GM13976 (cell line): ENCODE measurements at regions of chr5 and their contacts with region 1.

Region 1: DNA sequence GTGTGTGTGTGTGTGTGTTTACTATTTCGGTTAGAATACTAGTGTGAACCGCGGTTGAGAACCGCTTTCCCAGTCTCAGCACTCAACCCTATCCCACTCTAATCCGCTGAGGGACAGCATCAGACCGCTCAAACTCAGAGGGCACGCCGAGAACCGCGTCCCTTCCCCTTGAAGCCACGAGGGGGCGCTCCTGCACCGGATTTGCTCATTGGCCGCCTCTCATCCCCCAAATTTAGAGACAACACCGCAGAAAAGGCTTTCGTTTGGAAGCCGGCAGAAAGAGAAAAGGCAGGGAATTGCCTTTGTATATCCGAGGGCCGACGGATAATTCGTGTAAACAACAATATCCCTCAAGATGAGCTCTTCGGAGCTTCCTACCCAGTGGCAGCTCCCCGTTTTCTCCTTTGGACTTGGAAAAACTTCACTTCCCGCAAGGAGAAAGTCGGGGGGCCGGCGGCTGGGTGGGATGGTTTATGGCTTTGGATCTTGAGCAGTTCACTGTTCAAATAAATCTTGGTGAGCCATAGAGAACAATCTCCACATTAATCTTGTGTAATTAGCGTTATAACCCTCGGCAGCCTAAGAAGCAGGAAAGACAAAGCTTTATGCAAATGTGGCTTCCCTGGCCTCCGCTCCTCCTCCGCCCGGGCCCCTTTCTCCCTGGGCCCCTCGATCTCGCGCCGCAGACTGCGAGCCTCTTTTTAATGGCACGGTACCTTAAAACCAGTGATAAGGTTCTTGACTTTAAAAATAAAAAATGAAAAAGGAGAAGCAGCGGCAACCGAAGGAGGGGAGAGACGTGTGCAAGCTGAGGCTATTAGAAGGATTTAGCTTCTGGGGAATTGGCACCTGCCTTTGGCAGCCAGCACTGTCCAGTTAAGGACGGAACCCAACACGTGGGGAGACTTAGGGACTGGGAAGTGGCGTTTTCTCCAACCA is 296.8 kb downstream of the PARP8 start:
- DNase-seq: peak; percentile 88
- CTCF ChIP-seq: peak; percentile 99

Region 2: DNA sequence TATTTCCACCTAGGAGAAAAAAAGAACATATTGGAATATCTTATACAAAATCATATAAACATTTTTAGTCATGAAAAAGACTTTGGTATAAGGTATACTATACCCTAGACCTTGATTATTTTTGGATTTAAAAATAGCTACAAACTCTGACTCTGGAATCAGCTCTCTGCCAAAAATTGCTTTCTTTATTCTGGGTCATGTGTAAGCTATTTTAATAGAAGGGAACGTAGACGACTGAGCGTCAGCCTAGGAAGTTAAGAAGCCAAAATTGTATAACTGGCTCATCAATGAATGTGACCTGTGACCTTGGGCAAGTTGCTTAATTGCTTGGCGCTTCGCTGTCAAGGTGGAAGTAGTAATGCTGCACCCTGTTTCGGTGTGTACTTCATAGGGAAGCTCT is 139.6 kb before region 1 on chr5:
- in situ Hi-C with region 1: no loop called
- DNase-seq: no peak
- CTCF ChIP-seq: no peak

Region 3: GRCh38 chr5:51382763-51383490 is 419.7 kb after region 1 on chr5 and contains the start of gene ISL1:
- in situ Hi-C with region 1: loop called (anchors 25 kb)
- DNase-seq: no peak
- CTCF ChIP-seq: no peak

Region 4: GRCh38 chr5:52007230-52007858 is 1044.1 kb after region 1 on chr5:
- in situ Hi-C with region 1: loop called (anchors 25 kb)
- DNase-seq: no peak
- CTCF ChIP-seq: peak; percentile 61

Region 5: DNA sequence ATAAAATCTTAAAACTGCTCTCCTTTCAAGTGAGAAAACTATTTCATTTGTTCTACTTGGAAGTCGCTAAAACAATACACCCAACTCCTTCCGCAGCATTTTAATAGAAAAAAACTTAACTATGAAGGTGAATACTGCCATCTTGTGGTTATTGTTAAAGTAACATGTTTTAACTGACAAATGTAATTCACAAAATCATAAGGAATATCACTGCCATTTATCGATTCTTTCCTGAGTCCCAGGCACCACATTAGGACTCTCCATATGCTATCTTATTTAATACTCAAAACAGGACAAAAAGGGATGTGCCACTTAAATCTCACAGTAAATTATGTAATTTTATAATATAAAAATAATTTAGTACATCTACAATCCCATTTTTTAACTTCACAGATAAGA is 1694.0 kb after region 1 on chr5:
- in situ Hi-C with region 1: loop called (anchors 25 kb)
- DNase-seq: peak; percentile 22
- CTCF ChIP-seq: peak; percentile 38